ENCODE measurements at regions of chr14 and their contacts with region 1.

Region 1: GRCh38 chr14:101767618-101768362 is 6.3 kb downstream of the PPP2R5C start:
- DNase-seq: no peak
- H3K4me3 ChIP-seq: no peak overlapping the region
- H3K27ac ChIP-seq: peak overlapping the region in 1 of 2 experiments; percentile 28; a peak in 1 of 4 replicates
- H3K4me1 ChIP-seq: peaks cover 0 to 24% of the 10 kb centered on the region in 2 experiments; a peak in 2 of 4 replicates
- H3K27me3 ChIP-seq: no peaks in the 10 kb centered on the region
- CTCF ChIP-seq: no peak
- EP300 ChIP-seq: no peak
- RAD21 ChIP-seq: no peak

Region 2: DNA sequence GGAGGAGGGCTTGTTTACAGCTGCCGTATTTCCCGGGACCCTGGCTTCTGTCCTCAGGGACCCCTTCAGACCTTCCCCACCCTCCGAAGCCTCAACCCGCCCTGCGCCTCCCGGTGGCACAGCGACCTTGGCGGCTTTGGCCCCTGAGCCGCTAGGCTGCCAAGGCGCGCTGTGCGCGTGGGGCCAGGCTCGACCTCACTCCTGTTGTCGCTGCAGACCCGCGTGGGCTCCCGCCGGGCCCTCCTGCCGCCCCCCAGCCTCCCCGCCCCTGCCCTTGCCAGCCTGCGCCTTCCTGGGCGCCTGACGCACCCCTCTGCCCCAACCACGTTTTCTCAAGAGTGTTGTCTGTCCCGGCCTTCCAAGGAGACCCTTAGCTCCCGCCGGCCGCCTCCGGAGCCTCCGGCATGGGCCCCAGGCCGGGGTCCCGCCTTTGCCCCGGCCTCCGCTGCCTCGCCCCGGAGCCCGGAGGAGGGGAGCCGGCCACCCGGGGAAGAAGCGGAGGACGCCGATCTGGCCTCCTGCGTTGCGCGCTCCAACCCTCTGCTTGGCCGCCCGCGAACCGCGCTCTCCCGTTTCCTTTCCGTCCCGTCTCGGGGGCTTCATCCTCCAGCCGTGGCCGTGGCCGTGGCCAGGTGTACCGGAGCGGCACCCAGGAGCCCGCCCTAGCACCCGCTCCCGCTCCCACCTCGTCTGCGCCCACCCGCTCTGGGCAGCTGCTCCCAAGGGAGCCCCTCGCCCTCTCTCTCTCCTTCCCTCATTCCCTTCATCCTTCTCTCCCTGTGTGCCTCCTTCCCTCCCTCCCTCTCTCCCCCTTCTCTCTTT is 13.7 kb after region 1 on chr14:
- CTCF ChIA-PET with region 1: interaction called, 16 read pairs
- POLR2A ChIA-PET with region 1: no interaction called
- DNase-seq: peak; percentile 79
- H3K4me3 ChIP-seq: peak overlapping the region; percentile 37 to 55
- H3K27ac ChIP-seq: no peak overlapping the region
- H3K4me1 ChIP-seq: peaks cover 0 to 5% of the 10 kb centered on the region in 2 experiments; a peak in 1 of 4 replicates
- H3K27me3 ChIP-seq: no peaks in the 10 kb centered on the region
- CTCF ChIP-seq: no peak
- EP300 ChIP-seq: no peak
- RAD21 ChIP-seq: no peak

Region 3: DNA sequence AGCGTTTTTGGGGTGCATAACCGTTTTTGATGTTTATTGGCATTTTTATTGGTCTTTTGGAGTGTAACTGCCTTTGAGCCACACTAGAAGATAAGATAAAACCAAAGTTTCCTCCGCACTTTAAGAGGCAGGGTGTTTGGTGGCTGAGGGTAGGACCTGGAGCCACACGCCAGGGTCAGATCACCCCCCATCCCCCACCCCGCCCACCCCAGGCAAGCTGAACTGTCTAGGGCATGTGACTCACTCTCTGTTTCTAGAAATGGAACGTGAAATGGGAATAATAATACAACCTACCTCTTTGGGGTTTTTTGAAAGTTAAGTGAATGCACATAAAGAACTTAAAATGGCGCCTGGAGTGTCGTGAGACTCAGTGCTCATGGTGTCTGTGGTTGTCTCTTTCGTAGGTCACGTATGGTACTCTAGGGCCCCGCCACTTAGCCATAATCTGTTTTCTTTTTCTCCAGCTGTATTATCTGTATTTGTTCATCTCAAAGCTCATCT is 49.8 kb after region 1 on chr14:
- CTCF ChIA-PET with region 1: interaction called, 14 read pairs
- POLR2A ChIA-PET with region 1: no interaction called
- DNase-seq: no peak
- H3K4me3 ChIP-seq: no peak overlapping the region
- H3K27ac ChIP-seq: peak overlapping the region in 1 of 2 experiments; percentile 44; a peak in 1 of 4 replicates
- H3K4me1 ChIP-seq: peaks cover 0 to 23% of the 10 kb centered on the region in 2 experiments; a peak in 1 of 4 replicates
- H3K27me3 ChIP-seq: no peaks in the 10 kb centered on the region
- CTCF ChIP-seq: no peak
- EP300 ChIP-seq: no peak
- RAD21 ChIP-seq: no peak

Region 4: GRCh38 chr14:101878828-101879528 is 111.2 kb after region 1 on chr14:
- CTCF ChIA-PET with region 1: interaction called, 10 read pairs
- POLR2A ChIA-PET with region 1: no interaction called
- DNase-seq: no peak
- H3K4me3 ChIP-seq: no peak overlapping the region
- H3K27ac ChIP-seq: peak overlapping the region in 1 of 2 experiments; percentile 48; a peak in 1 of 4 replicates
- H3K4me1 ChIP-seq: peaks cover 11 to 46% of the 10 kb centered on the region in 2 experiments; a peak in 3 of 4 replicates
- H3K27me3 ChIP-seq: no peaks in the 10 kb centered on the region
- CTCF ChIP-seq: no peak
- EP300 ChIP-seq: no peak
- RAD21 ChIP-seq: no peak

Region 5: GRCh38 chr14:101908795-101909194 is 141.0 kb after region 1 on chr14:
- CTCF ChIA-PET with region 1: interaction called, 27 read pairs
- POLR2A ChIA-PET with region 1: no interaction called
- DNase-seq: no peak
- H3K4me3 ChIP-seq: no peak overlapping the region
- H3K27ac ChIP-seq: no peak overlapping the region
- H3K4me1 ChIP-seq: no peaks in the 10 kb centered on the region
- H3K27me3 ChIP-seq: no peaks in the 10 kb centered on the region
- CTCF ChIP-seq: no peak
- EP300 ChIP-seq: no peak
- RAD21 ChIP-seq: no peak

Region 6: GRCh38 chr14:101953151-101953550 is 185.4 kb after region 1 on chr14:
- CTCF ChIA-PET with region 1: interaction called, 31 read pairs
- POLR2A ChIA-PET with region 1: interaction called, 7 read pairs
- DNase-seq: no peak
- H3K4me3 ChIP-seq: no peak overlapping the region
- H3K27ac ChIP-seq: no peak overlapping the region
- H3K4me1 ChIP-seq: peaks cover 0 to 11% of the 10 kb centered on the region in 2 experiments; a peak in 1 of 4 replicates
- H3K27me3 ChIP-seq: no peaks in the 10 kb centered on the region
- CTCF ChIP-seq: no peak
- EP300 ChIP-seq: no peak
- RAD21 ChIP-seq: no peak